A673 (cell line): ENCODE measurements at regions of chr15 and their contacts with region 1.

Region 1: DNA sequence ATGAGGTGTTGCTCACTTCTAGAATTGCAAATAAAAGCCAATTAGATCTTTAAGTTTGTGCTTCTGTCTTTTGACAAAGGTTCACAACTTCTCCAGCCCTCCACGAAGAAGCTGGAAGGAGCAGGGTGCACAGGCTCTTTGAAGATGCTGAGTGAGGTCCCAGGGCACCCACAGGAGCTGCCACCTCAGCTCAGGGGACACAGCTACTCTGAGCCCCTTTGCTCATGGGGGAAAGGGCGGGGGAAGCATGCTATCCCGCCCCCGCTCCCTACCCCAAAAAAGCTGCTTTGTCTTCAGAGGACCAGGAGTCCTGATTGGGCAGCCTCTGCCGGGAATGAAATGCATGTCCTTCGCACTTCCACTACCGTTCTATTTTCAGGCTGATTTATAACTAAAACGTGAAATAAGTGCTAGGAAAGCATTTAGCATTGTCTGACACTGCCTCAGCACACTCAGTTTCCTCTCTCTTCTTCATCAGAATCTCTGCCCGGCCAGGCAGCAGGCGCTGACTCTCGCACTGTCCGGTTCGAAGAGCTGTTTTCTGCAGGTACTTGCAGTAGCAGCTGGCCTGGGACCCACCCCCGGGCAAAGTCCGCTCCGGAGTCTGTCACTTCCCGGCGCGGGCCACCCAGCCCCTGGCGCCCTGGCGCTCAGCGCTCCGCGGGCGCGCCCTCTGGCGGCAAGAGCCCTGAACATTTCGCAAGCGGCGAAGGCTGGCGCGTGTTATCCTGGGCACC is 45.5 kb upstream of the KLHL25 start:
- DNase-seq: peak; percentile 80
- H3K4me3 ChIP-seq: peak overlapping the region; percentile 43
- H3K27ac ChIP-seq: no peak overlapping the region
- H3K4me1 ChIP-seq: no peaks in the 10 kb centered on the region
- H3K27me3 ChIP-seq: no peaks in the 10 kb centered on the region
- CTCF ChIP-seq: peak; percentile 97

Region 2: DNA sequence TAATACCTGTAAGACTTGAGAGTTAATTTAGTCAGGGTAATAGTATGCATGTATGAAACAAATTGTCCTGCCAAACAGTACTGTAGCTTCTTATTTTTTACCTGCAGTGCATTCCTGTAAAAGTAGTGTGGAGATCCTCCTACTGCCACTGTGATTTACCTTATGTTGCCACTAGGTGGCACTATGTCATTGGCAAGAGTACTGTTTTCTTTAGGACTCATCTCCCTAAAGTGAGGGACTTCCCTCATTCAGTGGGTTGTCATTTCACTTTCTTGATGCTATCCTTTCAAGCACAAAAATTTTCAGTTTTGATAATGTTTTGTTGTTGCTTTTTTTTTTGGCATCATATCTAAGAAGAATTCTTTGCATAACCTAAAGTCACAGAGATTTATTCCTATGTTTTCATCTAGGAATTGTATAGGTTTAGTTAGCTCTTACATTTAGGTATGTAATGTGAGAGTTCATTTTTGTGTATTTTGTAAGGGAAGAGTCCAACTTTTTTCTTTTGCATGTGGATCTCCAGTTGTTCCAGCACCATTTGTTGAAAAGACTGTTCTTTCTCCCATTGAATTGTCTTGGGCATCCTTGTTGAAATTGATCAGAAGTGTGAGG is 354.2 kb before region 1 on chr15:
- CTCF ChIA-PET with region 1: no interaction called
- POLR2A ChIA-PET with region 1: no interaction called
- intact Hi-C with region 1: loop called (anchors 5 kb)
- DNase-seq: peak; percentile 82
- H3K4me3 ChIP-seq: no peak overlapping the region
- H3K27ac ChIP-seq: no peak overlapping the region
- H3K4me1 ChIP-seq: peaks cover 35% of the 10 kb centered on the region
- H3K27me3 ChIP-seq: no peaks in the 10 kb centered on the region
- CTCF ChIP-seq: peak; percentile 80

Region 3: DNA sequence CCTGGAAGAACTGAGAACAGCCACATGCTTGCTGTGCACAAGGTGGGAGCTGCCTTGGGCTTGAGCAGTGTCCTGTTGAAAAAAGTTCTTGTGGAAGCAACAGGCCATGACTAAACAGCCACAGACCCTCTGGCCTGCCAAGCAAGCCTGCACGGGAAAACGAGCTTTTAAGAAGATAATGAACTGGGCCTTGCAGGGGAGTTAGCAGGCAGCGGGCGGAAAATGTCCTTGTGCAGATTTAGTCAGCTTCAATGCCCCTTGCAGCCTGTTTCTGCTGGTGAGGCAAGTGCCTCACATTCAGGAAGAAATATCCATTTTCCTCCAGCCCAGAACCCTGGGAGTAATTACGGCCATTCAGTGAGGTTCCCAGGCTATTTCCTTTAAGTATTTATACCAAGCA is 80.7 kb after region 1 on chr15:
- CTCF ChIA-PET with region 1: no interaction called
- POLR2A ChIA-PET with region 1: no interaction called
- intact Hi-C with region 1: no loop called
- DNase-seq: no peak
- H3K4me3 ChIP-seq: no peak overlapping the region
- H3K27ac ChIP-seq: no peak overlapping the region
- H3K4me1 ChIP-seq: no peaks in the 10 kb centered on the region
- H3K27me3 ChIP-seq: peaks cover 26% of the 10 kb centered on the region
- CTCF ChIP-seq: no peak